PC-3 (cell line): ENCODE measurements at regions of chr6 and their contacts with region 1.

Region 1: DNA sequence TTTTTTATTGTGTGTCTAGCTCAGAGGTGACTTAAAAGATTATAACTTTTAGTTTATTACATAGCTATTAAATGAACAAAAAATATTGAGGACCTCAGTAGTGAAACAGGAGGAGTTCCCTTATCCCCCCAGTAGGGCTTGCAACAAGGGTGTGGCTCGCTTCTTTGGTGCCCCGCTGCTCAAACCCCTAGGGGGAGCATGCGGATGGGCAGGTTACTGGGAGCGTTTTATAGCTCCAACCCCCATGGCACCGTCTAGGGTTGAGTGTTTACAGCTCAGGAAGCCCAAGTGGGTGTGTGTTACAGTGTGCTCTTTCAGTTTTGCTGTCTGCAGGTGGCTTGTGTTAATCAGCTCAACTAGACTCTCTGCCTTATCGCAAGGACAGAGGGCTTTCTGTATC is 1513.7 kb downstream of the GRIK2 start:
- DNase-seq: no peak
- ATAC-seq: no peak
- H3K4me3 ChIP-seq: no peak overlapping the region
- H3K27ac ChIP-seq: no peak overlapping the region
- H3K4me1 ChIP-seq: no peaks in the 10 kb centered on the region
- H3K27me3 ChIP-seq: no peaks in the 10 kb centered on the region
- CTCF ChIP-seq: no peak

Region 2: DNA sequence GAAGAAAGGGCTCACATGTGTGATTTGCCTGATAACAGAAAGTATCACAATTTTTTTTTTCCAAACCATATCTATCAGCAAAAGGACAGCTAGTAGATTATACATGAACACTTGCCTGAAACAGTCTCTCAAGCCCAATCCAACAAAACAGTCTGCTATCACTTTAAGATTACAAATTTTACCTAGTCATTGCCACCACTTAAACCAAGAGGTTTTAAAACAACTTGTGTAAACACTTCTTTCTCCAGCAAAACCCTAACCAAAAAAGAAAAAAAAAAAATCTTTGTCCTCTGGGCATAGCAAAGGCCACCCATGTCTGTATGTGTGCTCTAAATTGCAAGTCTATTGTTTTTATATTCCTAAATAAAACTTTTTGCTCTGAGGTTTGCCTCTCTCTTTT is 54.7 kb after region 1 on chr6:
- CTCF ChIA-PET with region 1: no interaction called
- POLR2A ChIA-PET with region 1: interaction called, 12 read pairs
- intact Hi-C with region 1: no loop called
- DNase-seq: no peak
- ATAC-seq: no peak
- H3K4me3 ChIP-seq: no peak overlapping the region
- H3K27ac ChIP-seq: no peak overlapping the region
- H3K4me1 ChIP-seq: no peaks in the 10 kb centered on the region
- H3K27me3 ChIP-seq: no peaks in the 10 kb centered on the region
- CTCF ChIP-seq: no peak